ENCODE measurements at regions of chr15 and their contacts with region 1.

Region 1: GRCh38 chr15:39444735-39445470 is 136.0 kb upstream of the THBS1 start:
- DNase-seq: no peak
- H3K4me3 ChIP-seq: no peak overlapping the region
- H3K27ac ChIP-seq: no peak overlapping the region
- H3K4me1 ChIP-seq: no peaks in the 10 kb centered on the region
- H3K27me3 ChIP-seq: no peaks in the 10 kb centered on the region
- CTCF ChIP-seq: no peak
- POLR2A ChIP-seq: no peak

Region 2: DNA sequence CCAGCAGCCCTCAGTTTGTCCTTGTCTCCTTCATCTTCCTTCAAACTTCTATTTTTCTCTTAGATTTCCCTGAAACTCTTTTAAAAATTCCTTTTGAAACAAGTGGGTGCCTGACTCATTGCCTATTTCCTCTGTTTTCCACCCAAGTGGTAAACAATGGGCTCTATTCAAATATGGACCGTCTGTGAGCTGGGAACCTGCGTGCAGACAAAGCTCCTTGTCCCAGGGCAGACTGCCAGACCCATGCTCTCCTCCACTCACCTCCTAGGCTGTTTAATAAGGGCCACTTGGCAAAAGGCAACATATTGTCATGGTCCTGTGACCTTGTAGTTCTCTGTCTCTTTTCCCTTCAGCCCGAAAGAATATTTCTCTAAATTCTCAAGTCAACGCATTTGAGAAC is 196.7 kb before region 1 on chr15:
- intact Hi-C with region 1: no loop called
- DNase-seq: no peak
- H3K4me3 ChIP-seq: no peak overlapping the region
- H3K27ac ChIP-seq: no peak overlapping the region
- H3K4me1 ChIP-seq: no peaks in the 10 kb centered on the region
- H3K27me3 ChIP-seq: no peaks in the 10 kb centered on the region
- CTCF ChIP-seq: no peak
- POLR2A ChIP-seq: no peak

Region 3: DNA sequence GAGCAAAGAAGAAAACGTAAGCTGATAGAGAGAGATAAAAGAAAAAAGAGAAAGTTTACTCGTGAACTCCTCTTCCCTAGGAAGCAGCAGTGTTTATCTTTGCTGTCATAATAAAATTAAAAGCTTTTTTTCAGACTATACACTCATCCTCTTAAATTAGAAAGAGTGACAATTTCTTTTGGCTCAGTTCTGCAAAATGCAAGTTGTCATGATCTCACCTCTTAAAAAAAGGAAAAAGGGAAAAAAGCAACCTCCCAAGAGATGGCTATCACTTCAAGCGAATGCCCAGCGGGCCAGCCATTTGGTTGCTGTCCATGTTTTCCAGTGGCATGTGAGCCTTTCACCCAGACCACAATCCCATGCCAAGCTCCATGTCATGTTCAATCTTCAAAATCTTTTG is 128.9 kb after region 1 on chr15:
- intact Hi-C with region 1: loop called (anchors 5 kb)
- DNase-seq: no peak
- H3K4me3 ChIP-seq: no peak overlapping the region
- H3K27ac ChIP-seq: peak overlapping the region in 1 of 2 donors; percentile 23
- H3K4me1 ChIP-seq: peaks cover 5% of the 10 kb centered on the region
- H3K27me3 ChIP-seq: no peaks in the 10 kb centered on the region
- CTCF ChIP-seq: no peak
- POLR2A ChIP-seq: no peak

Region 4: DNA sequence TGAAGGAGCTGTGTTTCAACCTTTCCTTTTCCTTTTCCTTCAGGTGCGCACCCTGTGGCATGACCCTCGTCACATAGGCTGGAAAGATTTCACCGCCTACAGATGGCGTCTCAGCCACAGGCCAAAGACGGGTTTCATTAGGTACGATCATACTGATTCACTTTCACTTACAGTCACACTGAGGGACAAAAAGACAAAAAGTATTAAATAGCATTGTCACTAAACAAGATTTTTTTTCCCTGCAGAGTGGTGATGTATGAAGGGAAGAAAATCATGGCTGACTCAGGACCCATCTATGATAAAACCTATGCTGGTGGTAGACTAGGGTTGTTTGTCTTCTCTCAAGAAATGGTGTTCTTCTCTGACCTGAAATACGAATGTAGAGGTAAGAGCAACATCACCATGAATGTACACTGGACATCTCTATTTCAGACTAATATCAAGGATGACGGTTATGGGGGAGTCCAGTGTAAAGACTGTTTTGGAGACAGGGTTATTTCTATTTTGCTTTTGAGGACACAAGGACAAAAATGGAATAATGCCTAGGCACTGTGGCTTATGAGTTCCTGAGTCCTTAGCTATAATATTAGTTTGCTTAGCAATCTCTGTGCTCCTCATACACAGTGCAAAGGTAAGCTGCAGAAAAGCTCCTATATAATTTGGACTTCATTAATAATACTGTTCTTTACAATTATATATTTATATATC is 149.3 kb after region 1 on chr15:
- intact Hi-C with region 1: no loop called
- DNase-seq: no peak
- H3K4me3 ChIP-seq: no peak overlapping the region
- H3K27ac ChIP-seq: no peak overlapping the region
- H3K4me1 ChIP-seq: no peaks in the 10 kb centered on the region
- H3K27me3 ChIP-seq: no peaks in the 10 kb centered on the region
- CTCF ChIP-seq: no peak
- POLR2A ChIP-seq: no peak